ENCODE measurements at regions of chr3 and their contacts with region 1.

Region 1: DNA sequence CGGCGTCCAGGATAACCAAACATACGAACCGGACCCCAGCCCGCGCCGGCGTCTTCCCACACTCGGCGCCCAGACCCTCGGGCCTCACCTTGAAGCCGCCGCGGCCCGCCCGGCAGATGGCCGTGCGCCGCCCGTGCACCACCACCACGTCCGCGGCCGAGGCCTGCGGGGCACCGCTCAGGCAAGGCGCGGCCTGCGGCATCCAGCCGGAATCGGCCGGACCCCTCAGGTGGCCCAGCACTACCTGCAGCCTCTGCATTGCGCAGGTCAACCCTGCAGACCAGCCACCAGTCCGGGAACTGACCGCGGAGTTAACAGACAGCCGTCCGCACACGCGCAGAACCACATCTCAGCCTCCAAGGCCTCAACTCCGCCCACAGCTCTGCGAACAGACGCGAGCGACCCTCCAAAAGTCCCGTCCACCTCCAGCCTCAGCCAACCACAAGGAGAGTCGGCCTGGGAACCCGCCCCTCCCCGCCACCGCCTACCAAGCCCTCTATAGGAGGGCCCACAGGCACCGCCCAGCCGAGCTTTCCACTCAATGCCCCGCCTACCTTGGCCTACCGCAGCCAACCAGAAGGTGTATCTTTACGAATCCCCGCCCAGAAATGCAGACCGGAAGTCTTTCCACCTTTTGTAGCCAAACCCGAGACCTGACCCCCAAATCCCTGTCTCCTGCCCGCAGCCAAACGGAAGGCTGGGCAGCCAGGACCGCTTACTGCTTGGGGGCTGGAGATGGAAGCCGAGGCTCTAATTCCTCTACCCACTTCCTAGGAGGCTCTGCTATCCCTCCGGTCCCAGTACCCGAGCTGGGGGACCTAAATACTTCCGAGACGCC is at the start of gene ACAA1:
- DNase-seq: peak; percentile 100
- total RNA-seq, gene ACAA1: 86.8 TPM

Region 2: GRCh38 chr3:38164966-38165680 is 28.1 kb after region 1 on chr3 and contains the start of gene OXSR1:
- intact Hi-C with region 1: loop called (anchors 1 kb)
- DNase-seq: peak; percentile 99
- total RNA-seq, gene OXSR1: 30.6 TPM

Region 3: GRCh38 chr3:38346587-38347410 is 209.8 kb after region 1 on chr3 and contains the start of gene XYLB:
- intact Hi-C with region 1: loop called (anchors 5 kb)
- DNase-seq: peak; percentile 94
- total RNA-seq, gene XYLB: 0.46 TPM

Region 4: DNA sequence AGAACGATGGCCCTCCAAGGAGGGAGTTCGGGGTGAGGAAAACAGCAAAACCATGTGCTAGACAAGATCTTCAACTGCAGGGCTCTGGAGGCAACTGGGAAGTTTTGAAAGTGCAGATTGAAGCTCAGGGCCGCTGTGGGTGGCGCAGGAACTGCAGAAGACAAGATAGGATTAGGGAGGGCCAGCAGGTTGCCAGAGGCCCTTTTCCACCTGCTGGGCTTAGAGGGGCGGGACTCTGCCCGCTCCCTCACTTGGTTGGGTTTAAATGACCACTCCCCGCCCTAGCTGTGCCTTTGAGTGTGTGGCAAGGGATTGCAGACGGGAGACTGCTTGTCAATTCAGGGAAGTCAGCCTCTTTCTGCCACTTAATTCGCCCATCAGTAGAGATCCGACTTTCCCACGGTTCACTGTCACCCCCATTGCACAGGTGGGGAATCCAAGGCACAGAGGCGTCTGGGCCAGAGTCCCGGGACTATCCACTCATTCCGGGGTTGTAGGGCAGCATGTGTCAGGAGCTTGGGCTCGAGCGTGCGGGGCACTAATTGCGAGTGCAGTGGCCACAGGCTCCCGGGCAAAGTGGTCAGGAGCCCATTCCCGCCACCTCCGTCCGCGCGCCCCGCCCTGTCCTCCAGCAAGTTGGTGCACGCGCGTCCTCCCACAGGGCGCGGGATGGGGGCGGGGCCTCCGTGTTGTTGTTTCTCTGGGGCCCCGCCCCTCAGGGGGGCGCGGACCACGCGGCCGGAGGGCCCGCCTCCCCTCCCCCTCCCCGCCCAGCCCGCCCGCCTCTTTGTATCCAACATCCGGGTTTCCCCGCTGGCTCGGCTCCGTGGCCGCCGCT is 316.3 kb after region 1 on chr3 and contains the start of gene ACVR2B:
- intact Hi-C with region 1: loop called (anchors 1 kb)
- DNase-seq: peak; percentile 92
- total RNA-seq, gene ACVR2B: 6.3 TPM

Measured in cardiac septum (tissue), 1 donor.